Dendritic cell treated with granulocyte-macrophage colony-stimulating factor and Interleukin-4, amounts not matched to agents 40 ng/mL and 50 ng/mL, for 4 days (primary cell): ENCODE measurements at regions of chr10 and their contacts with region 1.

Region 1: GRCh38 chr10:99711129-99711719 is 20.7 kb downstream of the COX15 start:
- H3K4me3 Mint-ChIP-seq: no peak overlapping the region
- H3K27ac Mint-ChIP-seq: no peak overlapping the region
- H3K4me1 Mint-ChIP-seq: no peaks in the 10 kb centered on the region
- H3K27me3 Mint-ChIP-seq: no peaks in the 10 kb centered on the region

Region 2: GRCh38 chr10:99394761-99395386 is 316.4 kb before region 1 on chr10:
- intact Hi-C with region 1: loop called (anchors 5 kb)
- H3K4me3 Mint-ChIP-seq: no peak overlapping the region
- H3K27ac Mint-ChIP-seq: no peak overlapping the region
- H3K4me1 Mint-ChIP-seq: peaks cover 12% of the 10 kb centered on the region
- H3K27me3 Mint-ChIP-seq: peaks cover 6% of the 10 kb centered on the region

Region 3: DNA sequence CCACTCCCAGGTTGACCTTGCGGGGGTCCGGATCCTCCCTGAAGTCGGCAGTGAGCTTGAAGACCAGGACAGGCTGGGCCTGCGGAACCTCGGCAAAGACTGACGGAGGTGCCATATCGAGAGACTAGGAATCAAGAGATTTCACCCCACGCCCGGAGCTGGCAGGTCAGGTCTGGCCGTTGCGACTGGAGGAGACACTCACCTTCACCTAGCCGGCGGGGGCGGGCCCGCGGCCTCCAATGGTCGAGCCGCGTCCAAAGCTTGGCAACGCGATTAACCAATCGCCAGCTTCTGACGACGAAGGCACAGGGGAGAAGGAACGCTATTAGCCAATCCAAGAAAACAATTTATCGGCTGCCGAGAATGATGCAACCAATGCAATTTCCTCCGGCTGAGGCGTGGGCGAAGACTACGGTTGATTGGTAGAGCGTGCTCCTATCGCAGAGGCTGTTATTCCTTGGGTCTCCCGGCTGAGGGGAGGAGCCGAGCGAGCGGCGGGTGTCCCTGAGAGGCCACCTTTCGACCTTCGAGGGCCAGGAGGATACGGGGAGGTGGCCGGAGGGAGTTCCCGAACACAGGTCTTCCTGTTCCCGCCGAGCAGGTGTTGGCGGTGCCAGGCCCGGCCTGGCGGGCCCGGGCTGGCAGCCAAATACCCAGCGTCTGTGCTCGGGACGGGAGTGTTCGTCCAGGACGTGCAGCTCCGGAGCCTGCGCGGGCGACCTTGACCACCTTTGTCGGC is 280.6 kb before region 1 on chr10 and contains the start of gene GOT1:
- intact Hi-C with region 1: loop called (anchors 5 kb)
- H3K4me3 Mint-ChIP-seq: peak within 1 kb of the TSS; percentile 94
- H3K27ac Mint-ChIP-seq: peak within 1 kb of the TSS; percentile 98
- H3K4me1 Mint-ChIP-seq: peaks cover 46% of the 10 kb centered on the region
- H3K27me3 Mint-ChIP-seq: no peaks in the 10 kb centered on the region

Region 4: GRCh38 chr10:99560277-99561126 is 150.7 kb before region 1 on chr10:
- intact Hi-C with region 1: loop called (anchors 2 kb)
- H3K4me3 Mint-ChIP-seq: no peak overlapping the region
- H3K27ac Mint-ChIP-seq: no peak overlapping the region
- H3K4me1 Mint-ChIP-seq: no peaks in the 10 kb centered on the region
- H3K27me3 Mint-ChIP-seq: no peaks in the 10 kb centered on the region

Region 5: DNA sequence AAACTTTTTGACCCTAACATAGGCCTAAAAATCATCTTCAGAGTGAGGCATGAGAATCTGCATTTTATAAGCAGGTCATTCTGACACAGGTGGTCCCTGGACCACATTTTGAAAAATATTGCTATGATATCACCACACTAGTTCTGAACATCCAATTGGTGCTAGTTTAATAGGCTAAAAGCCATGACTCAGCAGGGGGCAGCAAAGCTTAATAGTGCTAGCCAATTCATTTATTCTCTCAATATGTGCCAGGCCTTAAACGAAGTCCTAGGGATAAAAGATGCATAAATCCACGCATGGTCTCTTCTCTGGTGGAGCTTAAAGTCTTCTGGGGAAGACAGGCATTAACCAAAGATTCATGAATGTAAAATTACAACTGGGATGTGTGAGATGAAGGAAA is 80.8 kb before region 1 on chr10:
- intact Hi-C with region 1: loop called (anchors 1 kb)
- H3K4me3 Mint-ChIP-seq: no peak overlapping the region
- H3K27ac Mint-ChIP-seq: no peak overlapping the region
- H3K4me1 Mint-ChIP-seq: no peaks in the 10 kb centered on the region
- H3K27me3 Mint-ChIP-seq: no peaks in the 10 kb centered on the region